GM18951 (cell line): ENCODE measurements at regions of chr10 and their contacts with region 1.

Region 1: DNA sequence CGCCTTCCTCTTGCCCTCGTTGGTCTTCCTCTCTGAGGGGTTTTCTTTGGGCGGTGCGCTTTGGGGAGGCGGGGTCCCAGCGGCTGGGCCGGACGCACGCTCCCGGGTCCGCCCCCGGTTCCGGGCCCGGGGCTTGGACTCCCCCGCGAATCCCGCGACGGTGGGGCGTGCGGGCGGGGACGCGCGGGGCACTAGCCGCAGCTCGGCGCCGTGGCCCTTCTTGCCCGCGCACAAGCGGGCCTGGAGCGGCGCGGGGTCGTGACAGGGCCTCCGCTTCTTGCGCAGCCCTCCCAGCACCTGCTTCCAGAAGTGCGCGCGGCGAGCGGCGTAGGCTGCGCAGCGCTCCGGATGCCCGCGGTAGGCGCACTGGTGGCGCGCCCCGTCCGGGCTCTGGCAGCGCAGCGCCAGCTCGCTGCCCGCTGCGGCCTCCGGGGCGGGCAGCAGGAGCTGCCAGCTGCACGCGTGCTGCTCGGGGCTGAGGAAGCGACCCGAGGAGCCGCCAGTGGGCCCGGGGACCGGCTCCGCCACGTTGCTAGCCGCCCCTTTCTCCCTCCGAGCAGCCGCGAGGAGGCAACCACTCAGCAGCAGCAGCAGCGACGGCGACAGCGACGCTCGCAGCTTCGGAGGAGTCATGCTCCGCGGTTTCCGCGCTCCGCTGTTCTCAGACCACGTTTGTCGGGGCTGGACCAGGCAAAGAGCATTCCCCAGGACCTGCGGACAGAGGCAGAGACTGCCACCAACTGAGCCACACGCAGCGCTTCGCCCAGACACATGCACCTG is 759 bp downstream of the FGFBP3 start:
- POLR2A ChIP-seq: peak; percentile 68

Region 2: GRCh38 chr10:90920986-90921666 is 987.4 kb before region 1 on chr10 and contains the start of gene ANKRD1:
- in situ Hi-C with region 1: loop called (anchors 25 kb)
- POLR2A ChIP-seq: no peak

Region 3: GRCh38 chr10:91389636-91390512 is 518.7 kb before region 1 on chr10:
- in situ Hi-C with region 1: loop called (anchors 25 kb)
- POLR2A ChIP-seq: no peak

Region 4: DNA sequence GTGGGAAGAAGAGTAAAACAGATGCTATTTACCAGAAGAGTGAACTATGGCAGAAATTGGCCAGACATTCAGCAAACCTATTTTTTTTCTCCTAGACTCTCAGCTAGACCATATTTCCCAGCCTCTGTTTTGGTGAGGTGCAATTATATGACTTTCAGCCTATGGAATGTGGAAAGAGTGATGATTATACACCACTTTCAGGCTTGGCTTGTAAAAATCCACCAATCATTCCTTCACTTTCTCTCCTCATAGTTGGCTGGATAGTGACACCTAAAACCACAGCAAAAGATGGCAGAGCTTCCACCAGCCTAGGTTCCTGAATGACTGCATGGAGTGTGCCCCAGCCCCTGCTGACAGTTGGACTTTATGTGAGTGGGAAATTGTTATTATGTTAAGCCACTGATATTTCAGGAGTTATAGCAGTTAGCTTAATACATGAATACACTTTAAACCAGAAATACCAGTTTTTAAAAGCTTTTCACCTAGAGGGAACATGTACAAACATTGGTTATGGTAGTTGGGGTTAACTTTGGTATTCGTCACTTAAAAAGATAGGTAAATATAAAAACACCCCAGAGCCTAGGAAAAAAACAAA is 129.4 kb before region 1 on chr10:
- in situ Hi-C with region 1: no loop called
- POLR2A ChIP-seq: no peak

Region 5: GRCh38 chr10:92327445-92328433 is 419.2 kb after region 1 on chr10:
- in situ Hi-C with region 1: no loop called
- POLR2A ChIP-seq: no peak